ENCODE measurements at regions of chr16 and their contacts with region 1.

Region 1: GRCh38 chr16:66650707-66651473 is 45.7 kb downstream of the CMTM4 start:
- DNase-seq: peak; percentile 88
- ATAC-seq: peak; percentile 97
- H3K4me3 Mint-ChIP-seq: peak overlapping the region; percentile 55
- H3K27ac Mint-ChIP-seq: 0 out of 2 replicates have a peak overlapping the region, but pooled peaks have one; percentile 37
- H3K4me1 Mint-ChIP-seq: peaks cover 18% of the 10 kb centered on the region
- H3K27me3 Mint-ChIP-seq: no peaks in the 10 kb centered on the region
- CTCF ChIP-seq: peak; percentile 80

Region 2: DNA sequence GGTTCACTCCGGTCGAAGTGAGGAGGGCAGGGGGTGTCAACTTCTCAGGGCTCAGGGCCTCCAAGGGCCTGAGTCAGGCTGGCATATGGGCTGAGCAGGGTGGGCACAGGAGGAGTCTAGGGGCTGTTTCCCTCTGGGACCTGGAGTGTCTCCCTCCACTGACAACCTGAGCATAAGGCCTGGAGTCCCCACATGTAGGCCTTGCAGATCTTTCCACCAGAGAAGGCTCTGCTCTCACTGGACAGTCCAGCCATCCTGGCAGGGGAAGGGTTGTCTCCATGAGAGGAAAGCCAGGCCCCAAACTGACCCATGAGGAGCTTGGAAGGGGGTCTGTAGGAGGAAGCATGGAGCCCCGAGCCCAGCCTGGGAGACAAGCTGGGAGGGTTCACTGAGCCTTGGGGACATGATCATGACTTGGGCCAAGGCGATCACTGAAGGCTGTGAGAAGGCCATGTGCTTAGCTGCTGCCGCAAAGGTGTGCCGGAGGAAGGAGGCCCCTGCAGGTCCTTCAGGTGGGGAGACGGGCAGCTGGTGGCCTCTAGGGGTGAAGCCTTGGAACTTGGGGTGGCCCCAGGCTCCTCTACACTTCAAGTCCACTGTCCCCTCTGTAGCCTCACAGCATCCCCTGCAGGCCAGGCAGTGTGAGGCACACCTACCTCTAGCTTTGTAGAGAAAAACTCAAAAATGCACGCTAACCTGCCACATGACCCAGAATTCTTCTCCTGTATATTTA is 61.7 kb before region 1 on chr16:
- CTCF ChIA-PET with region 1: interaction called, 10 read pairs
- POLR2A ChIA-PET with region 1: no interaction called
- DNase-seq: peak; percentile 79
- ATAC-seq: peak; percentile 99
- H3K4me3 Mint-ChIP-seq: no peak overlapping the region
- H3K27ac Mint-ChIP-seq: no peak overlapping the region; the same call in 1 of the 2 replicates
- H3K4me1 Mint-ChIP-seq: peaks cover 17% of the 10 kb centered on the region
- H3K27me3 Mint-ChIP-seq: no peaks in the 10 kb centered on the region
- CTCF ChIP-seq: peak; percentile 42; the same call in 1 of the 2 replicates

Region 3: DNA sequence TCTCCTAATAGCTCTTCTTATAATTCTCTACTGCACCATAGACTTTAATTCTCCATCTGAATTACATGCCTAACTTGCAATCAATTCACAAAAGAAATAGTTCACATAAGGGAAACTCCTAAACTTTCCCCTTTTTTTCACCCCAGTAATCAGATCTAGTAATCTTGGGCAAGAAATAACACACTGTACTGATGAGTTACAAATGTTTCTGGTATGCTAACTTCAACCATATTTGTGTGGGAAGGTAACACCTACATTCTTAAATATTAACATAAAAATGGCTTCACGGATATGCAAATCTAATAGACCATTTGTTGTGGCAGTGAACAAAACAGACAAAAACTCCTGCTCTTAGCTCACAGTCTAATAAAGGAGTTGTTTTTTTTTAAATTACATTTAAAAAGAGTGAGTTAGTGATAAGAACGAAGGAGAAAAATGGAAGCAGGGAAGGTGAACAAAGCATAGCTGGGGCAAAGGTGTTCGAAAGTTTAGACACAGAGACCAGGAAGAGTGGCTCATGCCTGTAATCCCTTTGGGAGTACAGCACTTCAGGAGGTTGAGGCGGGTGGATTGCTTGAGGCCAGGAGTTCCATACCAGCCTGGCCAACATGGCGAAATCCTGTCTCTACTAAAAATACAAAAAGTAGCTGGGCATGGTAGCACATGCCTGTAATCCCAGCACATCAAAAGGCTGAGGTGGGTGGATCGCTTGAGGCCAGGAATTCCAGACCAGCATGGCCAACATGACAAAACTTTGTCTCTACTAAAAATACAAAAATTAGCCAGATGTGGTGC is 11.6 kb before region 1 on chr16:
- CTCF ChIA-PET with region 1: interaction called, 32 read pairs
- POLR2A ChIA-PET with region 1: no interaction called
- DNase-seq: no peak
- ATAC-seq: no peak; the same call in 1 of the 2 replicates
- H3K4me3 Mint-ChIP-seq: no peak overlapping the region
- H3K27ac Mint-ChIP-seq: peak overlapping the region; percentile 39
- H3K4me1 Mint-ChIP-seq: peaks cover 37% of the 10 kb centered on the region
- H3K27me3 Mint-ChIP-seq: no peaks in the 10 kb centered on the region
- CTCF ChIP-seq: no peak

Region 4: DNA sequence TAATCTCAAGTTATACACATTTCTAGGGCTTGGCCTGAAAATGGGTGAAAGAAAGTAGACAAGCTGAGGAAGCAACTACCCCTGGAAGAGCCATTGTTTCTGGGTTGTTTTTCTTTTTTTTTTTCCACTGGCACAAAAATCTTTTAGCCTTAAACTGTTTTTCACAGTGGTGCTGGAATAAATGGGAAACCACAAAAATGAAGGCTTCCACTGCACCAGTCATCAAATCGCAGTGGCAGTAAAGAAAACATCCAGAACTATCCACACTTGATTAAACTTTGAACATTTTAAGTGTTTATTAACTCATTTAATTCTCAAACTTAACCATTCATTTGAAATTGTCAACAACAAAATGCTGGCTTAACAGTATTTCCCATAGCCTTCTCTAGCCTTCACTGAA is 31.4 kb after region 1 on chr16:
- CTCF ChIA-PET with region 1: interaction called, 11 read pairs
- POLR2A ChIA-PET with region 1: no interaction called
- DNase-seq: no peak
- ATAC-seq: no peak
- H3K4me3 Mint-ChIP-seq: no peak overlapping the region
- H3K27ac Mint-ChIP-seq: no peak overlapping the region
- H3K4me1 Mint-ChIP-seq: peaks cover 5% of the 10 kb centered on the region
- H3K27me3 Mint-ChIP-seq: no peaks in the 10 kb centered on the region
- CTCF ChIP-seq: no peak

Region 5: GRCh38 chr16:66713076-66713475 is 62.2 kb after region 1 on chr16:
- CTCF ChIA-PET with region 1: interaction called, 13 read pairs
- POLR2A ChIA-PET with region 1: no interaction called
- DNase-seq: no peak
- ATAC-seq: 0 out of 2 replicates have a peak, but pooled peaks have one; percentile 12
- H3K4me3 Mint-ChIP-seq: no peak overlapping the region
- H3K27ac Mint-ChIP-seq: no peak overlapping the region
- H3K4me1 Mint-ChIP-seq: no peaks in the 10 kb centered on the region
- H3K27me3 Mint-ChIP-seq: no peaks in the 10 kb centered on the region
- CTCF ChIP-seq: no peak

Region 6: GRCh38 chr16:66751303-66751991 is 100.6 kb after region 1 on chr16 and contains the start of gene DYNC1LI2:
- CTCF ChIA-PET with region 1: interaction called, 10 read pairs
- POLR2A ChIA-PET with region 1: no interaction called
- DNase-seq: peak; percentile 77
- ATAC-seq: peak; percentile 94
- H3K4me3 Mint-ChIP-seq: peak within 1 kb of the TSS; percentile 87
- H3K27ac Mint-ChIP-seq: peak within 1 kb of the TSS; percentile 81
- H3K4me1 Mint-ChIP-seq: peaks cover 25% of the 10 kb centered on the region
- H3K27me3 Mint-ChIP-seq: peaks cover 21% of the 10 kb centered on the region
- CTCF ChIP-seq: peak; percentile 74
- total RNA-seq, gene DYNC1LI2: 82.7 to 89.8 TPM (median 89.7 TPM) in 3 replicates

Measured in WTC11 (cell line).